ENCODE measurements at regions of chr15 and their contacts with region 1.

Region 1: DNA sequence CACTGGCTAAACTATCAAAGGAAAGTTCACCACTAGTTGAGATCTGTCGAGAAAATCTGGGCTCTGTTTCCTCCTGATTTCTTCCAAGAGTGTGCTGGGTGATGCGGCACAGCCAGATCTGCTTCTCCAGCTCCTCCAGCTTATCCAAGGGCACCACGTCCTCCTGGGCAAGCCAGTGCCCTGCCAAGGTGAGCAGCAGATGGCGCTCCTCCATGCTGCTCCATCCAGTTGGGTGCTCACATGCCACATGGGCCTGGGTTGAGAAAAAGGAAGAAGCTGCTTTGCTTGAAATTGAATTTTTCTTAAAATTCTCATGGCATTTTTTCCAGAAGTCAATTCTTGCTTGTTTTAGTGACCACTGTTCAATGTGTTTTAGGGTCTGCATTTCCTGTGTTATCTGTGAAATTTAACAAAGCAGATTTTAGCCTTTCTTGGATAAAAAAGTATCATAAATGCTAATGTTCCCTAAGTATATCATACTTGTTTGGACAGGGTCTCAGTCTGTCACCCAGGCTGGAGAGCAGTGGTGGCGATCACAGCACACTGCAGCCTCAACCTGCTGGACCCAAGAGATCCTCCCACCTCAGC is 47.3 kb downstream of the EIF3J start:
- DNase-seq: peak; percentile 45
- H3K4me3 ChIP-seq: no peak overlapping the region
- H3K27ac ChIP-seq: no peak overlapping the region
- H3K4me1 ChIP-seq: no peaks in the 10 kb centered on the region
- H3K27me3 ChIP-seq: no peaks in the 10 kb centered on the region

Region 2: DNA sequence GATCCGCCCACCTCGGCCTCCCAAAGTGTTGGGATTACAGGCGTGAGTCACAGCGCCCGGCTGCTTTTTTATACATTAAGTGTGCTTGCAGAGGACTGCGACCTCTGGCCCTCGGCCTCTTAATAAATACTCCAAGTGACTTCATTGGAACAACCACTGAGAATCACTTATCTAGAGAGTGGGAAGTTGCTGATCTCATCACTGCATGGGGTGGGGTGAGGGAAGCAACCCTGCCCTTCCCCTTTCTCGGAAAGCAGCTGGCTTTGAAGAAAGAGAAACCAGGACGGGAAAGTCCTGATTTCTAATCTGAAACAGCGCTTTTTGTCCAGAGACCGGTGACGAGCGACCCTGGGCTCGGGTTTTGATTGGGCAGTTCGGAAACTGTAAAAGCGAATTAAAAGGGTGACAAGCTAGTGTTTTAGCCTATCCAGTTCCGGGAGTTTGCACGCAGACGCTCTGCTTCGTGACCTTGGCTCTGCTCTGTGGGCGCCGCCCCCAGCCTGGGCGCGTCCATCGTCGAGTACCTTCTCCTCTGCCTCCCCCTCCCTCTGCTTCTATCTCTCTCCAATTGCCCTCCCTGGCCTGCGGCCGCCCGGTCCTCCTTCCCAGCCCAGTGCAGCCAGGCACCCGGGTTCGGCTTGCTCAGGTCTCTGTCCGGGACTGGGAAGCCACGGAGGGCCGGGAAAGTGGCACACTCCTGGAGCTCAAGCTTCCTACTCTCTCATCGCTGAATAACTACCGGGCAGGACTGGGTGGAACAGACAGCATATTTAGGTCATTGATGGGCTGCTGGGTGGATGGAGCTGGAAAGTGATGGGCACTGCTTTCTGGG is 144.5 kb after region 1 on chr15:
- in situ Hi-C with region 1: loop called (anchors 25 kb)
- DNase-seq: peak; percentile 97
- H3K4me3 ChIP-seq: peak overlapping the region; percentile 96
- H3K27ac ChIP-seq: peak overlapping the region; percentile 95
- H3K4me1 ChIP-seq: peaks cover 34% of the 10 kb centered on the region
- H3K27me3 ChIP-seq: no peaks in the 10 kb centered on the region